Dorsolateral prefrontal cortex (tissue), 120 donors: ENCODE measurements at regions of chr7 and their contacts with region 1.

Region 1: GRCh38 chr7:153518202-153518984 is 533.8 kb upstream of the DPP6 start:
- DNase-seq: no peak
- H3K4me3 ChIP-seq: no peak overlapping the region
- H3K27ac ChIP-seq: no peak overlapping the region
- H3K27me3 ChIP-seq: peaks cover 0 to 31% (median 2%) of the 10 kb centered on the region in 45 donors
- CTCF ChIP-seq: no peak

Region 2: GRCh38 chr7:153193144-153193595 is 325.2 kb before region 1 on chr7:
- intact Hi-C with region 1: no loop called
- DNase-seq: peak; percentile 30 to 69 (median 48)
- H3K4me3 ChIP-seq: peak overlapping the region in 38 of 59 donors; percentile 3 to 55 (median 39)
- H3K27ac ChIP-seq: no peak overlapping the region
- H3K27me3 ChIP-seq: peaks cover 0 to 2% (median 0%) of the 10 kb centered on the region in 45 donors
- CTCF ChIP-seq: peak; percentile 22 to 82 (median 71)

Region 3: DNA sequence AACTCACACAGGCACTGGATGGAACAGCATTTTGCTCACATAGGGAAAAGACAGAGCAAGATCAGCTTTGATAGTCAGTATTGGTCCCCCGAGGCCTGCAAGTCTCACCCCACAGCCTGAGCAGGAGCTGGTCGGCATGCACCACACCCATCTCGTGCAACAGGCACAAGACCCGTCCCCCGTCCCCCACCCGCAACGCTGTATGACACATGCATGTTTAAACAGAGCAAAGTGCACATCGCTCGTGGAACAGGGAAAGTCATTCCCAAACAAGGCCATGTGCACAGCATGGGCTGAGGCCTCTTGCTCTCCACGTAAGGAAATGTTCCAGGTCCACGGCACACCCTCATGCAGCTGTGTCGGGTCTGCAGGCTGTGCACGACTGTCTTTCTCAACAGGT is 231.6 kb before region 1 on chr7:
- intact Hi-C with region 1: no loop called
- DNase-seq: no peak
- H3K4me3 ChIP-seq: no peak overlapping the region
- H3K27ac ChIP-seq: no peak overlapping the region
- H3K27me3 ChIP-seq: peaks cover 0 to 5% (median 0%) of the 10 kb centered on the region in 45 donors
- CTCF ChIP-seq: no peak

Region 4: GRCh38 chr7:153457746-153458145 is 60.6 kb before region 1 on chr7:
- intact Hi-C with region 1: loop called in 1 of 2 experiments (anchors 10 kb)
- DNase-seq: no peak
- H3K4me3 ChIP-seq: no peak overlapping the region
- H3K27ac ChIP-seq: no peak overlapping the region
- H3K27me3 ChIP-seq: peaks cover 0 to 22% (median 0%) of the 10 kb centered on the region in 45 donors
- CTCF ChIP-seq: no peak